Uterus (tissue), 4 donors: ENCODE measurements at regions of chr4 and their contacts with region 1.

Region 1: DNA sequence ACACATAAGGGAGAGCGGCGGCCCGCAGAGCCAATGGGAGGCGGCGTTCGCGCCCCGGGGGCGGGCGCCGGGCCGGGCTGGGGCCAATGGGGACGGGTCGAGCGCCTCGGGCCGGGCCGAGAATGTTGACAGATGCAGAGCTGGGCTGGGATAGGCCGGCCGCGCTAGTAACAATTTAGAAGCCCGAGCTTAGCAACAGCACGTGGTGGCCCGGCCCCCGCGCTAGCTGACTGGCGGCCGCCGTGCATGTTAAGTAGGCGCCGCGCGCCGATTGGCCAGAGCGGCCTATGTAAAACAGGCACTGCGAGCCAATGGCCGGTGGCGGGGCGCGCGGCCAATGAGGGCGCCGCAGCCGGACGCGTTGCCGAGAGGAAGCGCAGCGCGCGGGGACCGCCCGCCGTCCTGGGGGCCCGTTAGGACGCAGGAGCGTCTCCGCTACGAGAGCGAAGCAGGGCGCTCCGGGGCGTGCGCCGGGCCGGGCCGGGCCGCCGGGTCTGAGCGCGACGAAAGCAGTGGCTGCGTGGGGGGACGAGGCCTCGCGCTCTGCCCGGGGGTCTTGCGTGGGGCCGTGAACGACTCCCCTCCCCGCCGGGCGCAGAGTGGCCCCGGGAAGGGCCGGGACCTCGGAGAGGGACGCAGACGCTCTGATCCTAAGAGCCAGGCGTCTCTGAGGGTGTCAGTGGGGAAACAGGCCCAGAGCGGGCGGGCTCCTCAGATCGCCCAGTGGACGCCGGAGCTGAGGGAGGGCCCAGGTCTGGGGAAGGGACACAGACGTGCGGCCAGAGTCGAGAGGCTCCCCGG is 434 bp upstream of the MXD4 start:
- DNase-seq: peak; percentile 99
- H3K4me3 ChIP-seq: peak overlapping the region; percentile 28 to 54
- H3K27ac ChIP-seq: peak overlapping the region; percentile 86 to 93
- H3K4me1 ChIP-seq: peaks cover 0 to 41% of the 10 kb centered on the region in 2 donors
- H3K27me3 ChIP-seq: no peaks in the 10 kb centered on the region
- CTCF ChIP-seq: peak in 1 of 4 experiments; percentile 9
- POLR2A ChIP-seq: peak; percentile 94 to 97

Region 2: GRCh38 chr4:2402029-2402428 is 139.7 kb after region 1 on chr4:
- intact Hi-C with region 1: loop called (anchors 10 kb)
- DNase-seq: peak; percentile 56 to 68
- H3K4me3 ChIP-seq: peak overlapping the region in 1 of 2 donors; percentile 15
- H3K27ac ChIP-seq: peak overlapping the region in 1 of 2 donors; percentile 10
- H3K4me1 ChIP-seq: peaks cover 0 to 12% of the 10 kb centered on the region in 2 donors
- H3K27me3 ChIP-seq: no peaks in the 10 kb centered on the region
- CTCF ChIP-seq: no peak
- POLR2A ChIP-seq: no peak